ENCODE measurements at regions of chr16 and their contacts with region 1.

Region 1: DNA sequence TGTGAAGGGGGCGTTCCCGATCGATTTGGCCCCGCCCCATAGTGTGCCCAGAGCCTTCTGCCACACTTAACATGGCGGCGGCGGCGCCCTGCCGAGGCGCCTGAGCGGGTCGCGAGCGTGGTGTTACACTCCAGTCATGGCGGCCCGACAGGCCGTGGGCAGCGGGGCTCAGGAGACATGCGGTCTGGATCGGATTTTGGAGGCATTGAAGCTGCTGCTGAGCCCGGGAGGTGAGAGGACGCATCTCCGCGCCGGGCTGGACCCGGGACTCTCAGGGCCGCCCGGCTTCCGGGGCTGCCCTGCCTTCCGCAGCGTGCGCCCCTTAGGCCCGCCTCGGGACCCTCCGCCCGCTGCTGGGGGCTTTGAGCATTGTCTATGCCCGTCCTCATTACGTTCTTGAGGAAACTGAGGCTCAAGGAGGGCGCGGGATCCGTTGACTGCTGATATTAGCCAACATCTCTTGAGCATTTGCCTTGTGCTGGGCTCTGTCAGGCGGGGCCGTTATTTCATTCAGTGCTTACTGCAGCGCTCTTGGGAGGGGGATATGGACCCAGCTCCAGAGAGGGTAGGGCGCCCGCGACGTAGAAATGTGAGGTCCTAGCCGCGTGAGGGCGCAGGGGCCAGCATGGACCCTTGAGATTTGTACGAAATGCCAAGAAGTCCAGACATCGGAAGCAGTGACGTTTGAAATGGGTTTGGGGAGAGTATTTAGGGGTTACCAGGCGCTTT is at the start of gene TANGO6:
- DNase-seq: peak; percentile 86
- H3K4me3 ChIP-seq: peak within 1 kb of the TSS; percentile 86 to 99 (median 96)
- H3K27ac ChIP-seq: peak within 1 kb of the TSS; percentile 76
- H3K4me1 ChIP-seq: peaks cover 7% of the 10 kb centered on the region
- H3K27me3 ChIP-seq: no peaks in the 10 kb centered on the region
- CTCF ChIP-seq: peak; percentile 23 to 60
- POLR2A ChIP-seq: peak; percentile 89
- total RNA-seq, gene TANGO6: 14.3 and 21.2 TPM in 2 replicates

Region 2: GRCh38 chr16:68528686-68529379 is 314.8 kb before region 1 on chr16:
- CTCF ChIA-PET with region 1: interaction called, 9 read pairs
- POLR2A ChIA-PET with region 1: no interaction called
- dilution Hi-C with region 1: no loop called
- intact Hi-C with region 1: loop called (anchors 1 kb)
- DNase-seq: peak; percentile 77
- H3K4me3 ChIP-seq: no peak overlapping the region
- H3K27ac ChIP-seq: no peak overlapping the region
- H3K4me1 ChIP-seq: peaks cover 10% of the 10 kb centered on the region
- H3K27me3 ChIP-seq: peaks cover 2 to 3% of the 10 kb centered on the region in 2 experiments
- CTCF ChIP-seq: peak; percentile 88 to 96
- POLR2A ChIP-seq: no peak

Region 3: GRCh38 chr16:68605746-68606145 is 237.9 kb before region 1 on chr16:
- CTCF ChIA-PET with region 1: no interaction called
- POLR2A ChIA-PET with region 1: no interaction called
- dilution Hi-C with region 1: no loop called
- intact Hi-C with region 1: no loop called
- DNase-seq: no peak
- H3K4me3 ChIP-seq: no peak overlapping the region
- H3K27ac ChIP-seq: no peak overlapping the region
- H3K4me1 ChIP-seq: no peaks in the 10 kb centered on the region
- H3K27me3 ChIP-seq: no peaks in the 10 kb centered on the region
- CTCF ChIP-seq: no peak
- POLR2A ChIP-seq: no peak

Region 4: GRCh38 chr16:68704232-68704867 is 139.3 kb before region 1 on chr16:
- CTCF ChIA-PET with region 1: no interaction called
- POLR2A ChIA-PET with region 1: no interaction called
- dilution Hi-C with region 1: no loop called
- intact Hi-C with region 1: loop called (anchors 1 kb)
- DNase-seq: peak; percentile 52
- H3K4me3 ChIP-seq: no peak overlapping the region
- H3K27ac ChIP-seq: no peak overlapping the region
- H3K4me1 ChIP-seq: peaks cover 3% of the 10 kb centered on the region
- H3K27me3 ChIP-seq: no peaks in the 10 kb centered on the region
- CTCF ChIP-seq: peak; percentile 78 to 85
- POLR2A ChIP-seq: no peak

Region 5: DNA sequence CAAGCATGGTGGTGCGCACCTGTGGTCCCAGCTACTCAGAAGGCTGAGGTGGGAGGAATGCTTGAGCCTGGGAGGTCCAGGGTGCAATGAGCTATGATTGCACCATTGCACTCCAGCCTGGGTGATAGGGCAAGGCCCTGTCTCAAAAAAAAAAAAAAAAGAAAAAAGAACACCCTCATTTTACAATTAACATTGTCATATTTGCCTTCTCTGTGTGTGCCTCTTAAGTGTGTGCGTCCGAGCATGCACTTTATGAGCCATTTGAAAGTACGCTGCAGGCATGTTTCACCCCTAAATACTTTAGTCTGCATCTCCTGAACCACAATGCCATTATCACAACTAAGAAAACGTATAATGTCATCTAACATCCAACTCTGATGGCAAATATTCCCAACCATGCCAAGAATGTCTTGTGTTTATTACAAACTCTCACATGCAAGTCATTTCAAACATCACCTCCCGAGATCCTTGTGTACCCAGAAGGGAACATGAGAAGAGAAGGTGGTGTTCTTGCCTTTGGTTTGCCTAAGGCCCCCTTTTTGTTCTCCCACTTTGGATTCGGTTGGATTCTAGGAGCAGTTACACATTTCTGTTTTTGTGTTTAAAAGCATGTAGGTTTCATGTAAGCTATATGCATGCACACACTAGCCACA is 68.5 kb before region 1 on chr16:
- CTCF ChIA-PET with region 1: no interaction called
- POLR2A ChIA-PET with region 1: no interaction called
- dilution Hi-C with region 1: no loop called
- intact Hi-C with region 1: no loop called
- DNase-seq: no peak
- H3K4me3 ChIP-seq: no peak overlapping the region
- H3K27ac ChIP-seq: no peak overlapping the region
- H3K4me1 ChIP-seq: no peaks in the 10 kb centered on the region
- H3K27me3 ChIP-seq: no peaks in the 10 kb centered on the region
- CTCF ChIP-seq: no peak
- POLR2A ChIP-seq: no peak

Region 6: DNA sequence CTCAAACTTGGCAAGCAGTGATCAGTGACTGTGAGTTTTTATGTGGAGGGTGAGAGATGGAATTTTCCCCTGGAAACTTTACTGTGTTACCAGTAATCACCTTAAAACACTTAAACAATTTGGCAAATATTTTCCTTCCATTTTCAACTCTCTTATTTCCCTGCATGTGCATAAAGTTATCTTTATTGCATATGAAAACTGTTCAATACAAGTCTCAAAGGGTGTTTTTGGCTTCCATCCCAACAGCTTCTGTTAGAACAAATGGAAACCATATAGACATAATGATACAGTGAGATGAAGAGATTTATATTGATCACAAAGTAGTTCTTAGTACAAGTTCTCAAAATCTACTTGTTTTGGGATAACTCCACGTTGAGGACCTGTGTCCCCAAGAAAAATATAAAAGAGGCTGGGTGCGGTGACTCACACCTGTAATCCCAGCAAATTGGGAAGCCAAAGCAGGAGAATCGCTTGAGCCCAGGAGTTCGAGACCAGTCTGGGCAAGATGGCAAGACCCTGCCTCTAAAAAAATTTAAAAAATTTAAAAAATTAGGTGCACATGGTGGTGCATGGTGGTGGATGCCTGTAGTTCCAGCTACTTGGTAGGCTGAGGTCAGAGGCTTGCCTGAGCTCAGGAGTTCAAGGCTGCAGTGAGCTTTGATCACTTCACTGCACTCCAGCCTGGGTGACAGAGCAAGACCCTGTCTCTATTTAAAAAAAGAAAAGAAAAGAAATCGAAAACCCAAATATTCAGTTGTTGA is 36.5 kb before region 1 on chr16:
- CTCF ChIA-PET with region 1: no interaction called
- POLR2A ChIA-PET with region 1: no interaction called
- dilution Hi-C with region 1: no loop called
- intact Hi-C with region 1: no loop called
- DNase-seq: no peak
- H3K4me3 ChIP-seq: no peak overlapping the region
- H3K27ac ChIP-seq: no peak overlapping the region
- H3K4me1 ChIP-seq: no peaks in the 10 kb centered on the region
- H3K27me3 ChIP-seq: no peaks in the 10 kb centered on the region
- CTCF ChIP-seq: no peak
- POLR2A ChIP-seq: no peak

Region 7: GRCh38 chr16:68902008-68902968 is 58.6 kb after region 1 on chr16:
- CTCF ChIA-PET with region 1: interaction called, 38 read pairs
- POLR2A ChIA-PET with region 1: no interaction called
- dilution Hi-C with region 1: no loop called
- intact Hi-C with region 1: loop called (anchors 1 kb)
- DNase-seq: peak; percentile 77
- H3K4me3 ChIP-seq: no peak overlapping the region
- H3K27ac ChIP-seq: no peak overlapping the region
- H3K4me1 ChIP-seq: no peaks in the 10 kb centered on the region
- H3K27me3 ChIP-seq: no peaks in the 10 kb centered on the region
- CTCF ChIP-seq: peak; percentile 61 to 73
- POLR2A ChIP-seq: no peak

Region 8: GRCh38 chr16:69112285-69113129 is 268.9 kb after region 1 on chr16:
- CTCF ChIA-PET with region 1: interaction called, 23 read pairs
- POLR2A ChIA-PET with region 1: no interaction called
- dilution Hi-C with region 1: no loop called
- intact Hi-C with region 1: no loop called
- DNase-seq: peak; percentile 52
- H3K4me3 ChIP-seq: no peak overlapping the region
- H3K27ac ChIP-seq: no peak overlapping the region
- H3K4me1 ChIP-seq: peaks cover 18% of the 10 kb centered on the region
- H3K27me3 ChIP-seq: no peaks in the 10 kb centered on the region
- CTCF ChIP-seq: peak; percentile 90
- POLR2A ChIP-seq: no peak

Region 9: GRCh38 chr16:69150146-69150865 is 306.7 kb after region 1 on chr16:
- CTCF ChIA-PET with region 1: interaction called, 12 read pairs
- POLR2A ChIA-PET with region 1: no interaction called
- dilution Hi-C with region 1: no loop called
- intact Hi-C with region 1: no loop called
- DNase-seq: peak; percentile 85
- H3K4me3 ChIP-seq: no peak overlapping the region
- H3K27ac ChIP-seq: no peak overlapping the region
- H3K4me1 ChIP-seq: no peaks in the 10 kb centered on the region
- H3K27me3 ChIP-seq: no peaks in the 10 kb centered on the region
- CTCF ChIP-seq: peak; percentile 59 to 63
- POLR2A ChIP-seq: no peak

Region 10: GRCh38 chr16:69579783-69580481 is 736.3 kb after region 1 on chr16:
- CTCF ChIA-PET with region 1: no interaction called
- POLR2A ChIA-PET with region 1: no interaction called
- dilution Hi-C with region 1: no loop called
- intact Hi-C with region 1: no loop called
- DNase-seq: no peak
- H3K4me3 ChIP-seq: no peak overlapping the region
- H3K27ac ChIP-seq: no peak overlapping the region
- H3K4me1 ChIP-seq: no peaks in the 10 kb centered on the region
- H3K27me3 ChIP-seq: no peaks in the 10 kb centered on the region
- CTCF ChIP-seq: no peak
- POLR2A ChIP-seq: no peak